ENCODE measurements at regions of chr14 and their contacts with region 1.

Region 1: DNA sequence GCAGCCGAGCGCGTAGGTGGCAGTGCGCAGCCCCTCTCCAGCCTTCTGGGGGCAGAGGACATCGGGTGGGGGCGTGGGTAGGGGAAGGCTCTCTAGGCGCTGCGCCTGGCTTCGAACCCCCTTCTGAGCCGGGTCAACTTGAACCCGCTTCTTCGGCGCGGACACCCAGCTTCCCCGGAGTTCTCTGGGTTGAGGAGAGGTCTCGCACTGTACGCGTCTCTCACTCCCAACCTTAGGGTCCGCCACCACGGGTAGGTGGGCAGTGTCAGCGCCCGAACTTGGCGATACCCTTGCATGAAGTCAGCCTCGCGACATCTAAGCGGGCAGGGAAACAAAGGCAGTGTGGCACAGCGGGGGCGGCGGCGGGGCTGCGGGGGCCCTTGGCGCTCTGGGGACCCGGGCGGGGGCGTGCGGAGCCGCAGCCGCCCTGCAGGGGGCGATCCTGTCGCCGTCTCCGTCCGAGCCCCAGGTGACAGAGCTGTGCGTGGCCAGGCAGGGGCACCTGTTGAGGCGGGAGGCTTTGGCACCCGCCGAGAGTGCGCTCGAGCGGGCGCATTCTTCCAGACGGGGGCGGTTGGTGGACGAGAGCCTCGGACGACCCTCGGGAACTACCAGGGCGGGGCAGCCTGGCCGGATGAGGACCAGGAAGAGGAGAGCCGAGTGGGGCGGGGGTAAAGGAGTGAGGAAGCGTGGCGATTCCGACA is 1.1 kb downstream of the GALNT16 start:
- DNase-seq: peak in 1 of 2 experiments; percentile 87
- H3K4me3 ChIP-seq: peak overlapping the region; percentile 67 to 94 (median 78)
- H3K27ac ChIP-seq: no peak overlapping the region
- H3K4me1 ChIP-seq: peaks cover 5 to 13% (median 9%) of the 10 kb centered on the region in 4 experiments
- H3K27me3 ChIP-seq: peaks cover 13 to 57% (median 42%) of the 10 kb centered on the region in 4 experiments
- CTCF ChIP-seq: peak; percentile 57 to 76 (median 66)
- EP300 ChIP-seq: no peak
- POLR2A ChIP-seq: no peak
- RAD21 ChIP-seq: peak; percentile 43 to 60; a peak in 3 of 4 replicates

Region 2: GRCh38 chr14:69242311-69243224 is 18.4 kb before region 1 on chr14:
- CTCF ChIA-PET with region 1: interaction called, 38 read pairs
- POLR2A ChIA-PET with region 1: interaction called, 4 read pairs
- DNase-seq: peak in 1 of 2 experiments; percentile 70
- H3K4me3 ChIP-seq: no peak overlapping the region
- H3K27ac ChIP-seq: no peak overlapping the region
- H3K4me1 ChIP-seq: no peaks in the 10 kb centered on the region
- H3K27me3 ChIP-seq: no peaks in the 10 kb centered on the region
- CTCF ChIP-seq: peak; percentile 39 to 65 (median 64)
- EP300 ChIP-seq: no peak
- POLR2A ChIP-seq: no peak
- RAD21 ChIP-seq: peak; percentile 75 to 79

Region 3: DNA sequence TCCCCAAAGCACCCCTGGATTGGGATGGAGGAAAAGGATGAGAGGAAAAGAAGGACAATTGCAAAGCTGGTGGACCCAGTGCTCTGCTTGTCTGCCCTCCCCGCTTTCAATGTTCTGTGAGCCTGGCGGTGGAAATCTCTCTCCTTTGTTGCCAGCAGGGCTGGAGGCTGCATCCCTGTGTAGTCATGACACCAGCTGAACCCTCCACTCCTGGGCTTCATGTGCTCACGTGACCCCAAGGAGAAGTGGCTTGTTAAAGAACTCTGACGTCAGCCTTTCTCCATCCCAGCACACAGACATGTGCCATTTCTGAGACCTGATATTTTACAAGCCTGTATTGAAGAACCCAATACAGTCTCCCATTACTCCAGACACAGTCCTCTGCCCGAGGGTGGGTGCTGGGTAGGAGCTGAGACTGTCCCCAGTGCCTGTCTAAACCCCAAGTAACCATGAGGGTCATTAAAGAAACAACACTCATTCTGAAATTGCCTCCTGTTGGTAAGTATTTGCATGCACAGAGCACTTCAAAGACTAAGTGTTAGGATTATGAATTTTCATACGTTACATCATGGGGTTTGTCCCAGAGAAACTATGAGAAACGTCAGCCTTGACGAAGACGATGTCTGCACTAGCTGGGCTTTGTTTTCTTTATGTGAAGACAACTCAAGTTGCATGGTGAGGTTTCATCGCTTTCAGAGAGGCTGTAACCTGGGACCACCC is 20.6 kb after region 1 on chr14:
- CTCF ChIA-PET with region 1: interaction called, 38 read pairs
- POLR2A ChIA-PET with region 1: no interaction called
- DNase-seq: no peak
- H3K4me3 ChIP-seq: no peak overlapping the region
- H3K27ac ChIP-seq: no peak overlapping the region
- H3K4me1 ChIP-seq: no peaks in the 10 kb centered on the region
- H3K27me3 ChIP-seq: no peaks in the 10 kb centered on the region
- CTCF ChIP-seq: no peak
- EP300 ChIP-seq: no peak
- POLR2A ChIP-seq: no peak
- RAD21 ChIP-seq: no peak

Region 4: DNA sequence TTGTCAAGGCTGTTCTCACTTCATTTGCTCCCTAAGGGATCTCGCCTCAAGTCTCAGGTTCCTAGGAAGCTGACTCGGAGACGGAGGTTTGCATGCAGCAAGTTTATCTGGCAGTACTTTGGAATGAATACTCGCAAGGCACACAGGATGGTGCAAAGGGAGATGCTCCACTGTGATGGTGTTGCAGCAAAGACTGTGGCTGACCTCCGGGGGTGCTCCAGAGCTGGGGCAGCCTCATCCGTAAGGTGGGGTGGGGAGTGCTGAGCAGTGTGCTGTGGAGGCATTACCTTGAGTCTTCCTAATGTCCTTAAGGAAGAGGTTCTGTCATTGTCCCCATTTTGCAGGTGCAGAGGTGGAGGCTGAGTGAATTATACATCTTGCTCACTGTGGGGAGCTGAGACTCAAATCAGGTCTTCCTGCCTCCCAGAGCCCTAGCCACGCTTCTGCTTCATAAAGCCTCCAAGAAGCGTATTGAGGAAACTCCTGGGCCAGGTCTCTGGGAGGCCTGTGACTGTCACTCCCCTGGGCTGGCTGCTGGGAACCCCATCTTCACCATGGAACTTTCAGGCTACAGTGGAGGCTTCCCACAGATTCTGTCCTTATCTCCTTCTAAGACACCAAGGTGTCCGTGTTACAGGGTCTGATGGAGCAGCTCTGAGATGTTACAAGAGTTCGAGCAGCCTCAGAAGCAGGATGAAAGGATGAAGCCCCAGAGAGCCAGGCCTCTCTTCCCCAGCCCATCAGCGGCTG is 38.4 kb after region 1 on chr14:
- CTCF ChIA-PET with region 1: interaction called, 10 read pairs
- POLR2A ChIA-PET with region 1: no interaction called
- DNase-seq: peak in 1 of 2 experiments; percentile 55
- H3K4me3 ChIP-seq: no peak overlapping the region
- H3K27ac ChIP-seq: no peak overlapping the region
- H3K4me1 ChIP-seq: no peaks in the 10 kb centered on the region
- H3K27me3 ChIP-seq: no peaks in the 10 kb centered on the region
- CTCF ChIP-seq: peak; percentile 65 to 90 (median 86)
- EP300 ChIP-seq: no peak
- POLR2A ChIP-seq: no peak
- RAD21 ChIP-seq: peak; percentile 66 to 72

Region 5: DNA sequence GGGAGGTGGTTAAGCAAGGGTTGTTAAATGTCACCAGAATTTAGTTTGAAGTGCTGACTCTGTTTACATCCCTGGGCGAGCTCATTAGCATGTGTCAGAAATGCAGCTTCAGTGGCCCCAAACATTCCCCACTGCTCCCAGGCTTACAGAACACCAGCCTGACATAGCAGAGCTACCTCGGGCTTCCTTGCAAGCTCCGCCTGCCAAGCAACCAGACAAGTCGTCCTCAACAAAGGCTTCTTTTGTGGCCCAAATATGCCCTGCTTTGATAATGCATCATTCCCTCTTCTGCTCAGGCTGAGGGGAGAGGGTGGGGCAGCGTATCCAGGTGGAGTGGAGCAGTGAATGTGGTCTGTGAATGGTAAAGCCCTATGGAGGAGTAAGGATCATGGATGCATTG is 109.0 kb after region 1 on chr14:
- CTCF ChIA-PET with region 1: interaction called, 10 read pairs
- POLR2A ChIA-PET with region 1: interaction called, 3 read pairs
- DNase-seq: no peak
- H3K4me3 ChIP-seq: no peak overlapping the region
- H3K27ac ChIP-seq: no peak overlapping the region
- H3K4me1 ChIP-seq: no peaks in the 10 kb centered on the region
- H3K27me3 ChIP-seq: no peaks in the 10 kb centered on the region
- CTCF ChIP-seq: no peak
- EP300 ChIP-seq: no peak
- POLR2A ChIP-seq: no peak
- RAD21 ChIP-seq: no peak

Measured in H1 (cell line).